Activated CD4-positive, alpha-beta T cell treated with anti-CD3 and anti-CD28 coated beads for 36 hours (primary cell): ENCODE measurements at regions of chr9 and their contacts with region 1.

Region 1: DNA sequence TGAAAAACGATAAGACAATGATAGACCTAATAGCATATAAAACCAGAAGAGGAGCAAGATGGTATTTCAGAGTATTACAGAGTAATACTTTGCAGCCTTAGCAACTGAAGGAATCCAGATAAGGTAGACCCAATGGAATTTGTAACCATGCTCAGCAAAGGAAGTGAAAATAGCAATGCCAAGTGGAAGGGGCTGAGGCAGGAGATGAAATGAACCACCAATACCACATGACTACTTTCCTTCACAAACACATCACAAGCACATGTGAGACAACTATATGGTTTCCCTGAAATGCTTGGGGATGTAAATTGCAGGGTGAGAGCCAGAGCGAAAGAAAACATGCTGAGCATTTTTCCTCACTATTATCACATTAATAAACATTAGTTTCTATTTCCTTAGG is 79.8 kb upstream of the MELK start:
- DNase-seq: peak; percentile 24
- ATAC-seq: peak; percentile 70
- H3K4me3 Mint-ChIP-seq: peak overlapping the region; percentile 61
- H3K27ac Mint-ChIP-seq: peak overlapping the region; percentile 88
- H3K4me1 Mint-ChIP-seq: peaks cover 66% of the 10 kb centered on the region
- H3K27me3 Mint-ChIP-seq: no peaks in the 10 kb centered on the region

Region 2: GRCh38 chr9:36470643-36471290 is 22.1 kb before region 1 on chr9:
- CTCF ChIA-PET with region 1: interaction called, 7 read pairs
- POLR2A ChIA-PET with region 1: no interaction called
- intact Hi-C with region 1: loop called (anchors 1 kb)
- DNase-seq: peak; percentile 78
- ATAC-seq: peak; percentile 97
- H3K4me3 Mint-ChIP-seq: peak overlapping the region; percentile 72
- H3K27ac Mint-ChIP-seq: peak overlapping the region; percentile 97
- H3K4me1 Mint-ChIP-seq: peaks cover 31% of the 10 kb centered on the region
- H3K27me3 Mint-ChIP-seq: no peaks in the 10 kb centered on the region

Region 3: GRCh38 chr9:36560857-36561221 is 68.0 kb after region 1 on chr9:
- CTCF ChIA-PET with region 1: interaction called, 3 read pairs
- POLR2A ChIA-PET with region 1: no interaction called
- intact Hi-C with region 1: loop called in 1 of 2 experiments (anchors 5 kb)
- DNase-seq: no peak
- ATAC-seq: no peak
- H3K4me3 Mint-ChIP-seq: no peak overlapping the region
- H3K27ac Mint-ChIP-seq: no peak overlapping the region
- H3K4me1 Mint-ChIP-seq: no peaks in the 10 kb centered on the region
- H3K27me3 Mint-ChIP-seq: no peaks in the 10 kb centered on the region